Lower leg skin (tissue), 4 donors: ENCODE measurements at regions of chr20 and their contacts with region 1.

Region 1: DNA sequence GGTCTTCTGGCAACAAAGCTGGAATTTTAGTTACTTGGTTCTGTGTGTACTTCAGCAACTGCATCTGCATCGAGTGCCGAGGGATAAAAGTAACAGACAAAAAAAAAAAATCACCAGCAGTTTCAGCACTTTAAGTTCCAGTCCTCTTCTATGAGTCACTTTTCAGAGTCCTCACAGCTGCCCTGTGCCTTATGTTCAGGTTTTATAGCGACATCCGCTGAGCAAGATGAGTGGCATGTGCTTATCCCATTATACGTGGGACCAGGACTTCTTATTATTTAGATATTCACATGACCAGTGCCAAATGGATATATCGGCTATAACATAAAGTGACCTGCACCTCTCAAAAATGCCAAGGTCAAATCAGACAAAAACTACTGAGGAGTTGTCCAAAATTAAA is 242.9 kb downstream of the FOXA2 start:
- DNase-seq: no peak
- H3K4me3 ChIP-seq: no peak overlapping the region
- CTCF ChIP-seq: no peak
- POLR2A ChIP-seq: no peak

Region 2: DNA sequence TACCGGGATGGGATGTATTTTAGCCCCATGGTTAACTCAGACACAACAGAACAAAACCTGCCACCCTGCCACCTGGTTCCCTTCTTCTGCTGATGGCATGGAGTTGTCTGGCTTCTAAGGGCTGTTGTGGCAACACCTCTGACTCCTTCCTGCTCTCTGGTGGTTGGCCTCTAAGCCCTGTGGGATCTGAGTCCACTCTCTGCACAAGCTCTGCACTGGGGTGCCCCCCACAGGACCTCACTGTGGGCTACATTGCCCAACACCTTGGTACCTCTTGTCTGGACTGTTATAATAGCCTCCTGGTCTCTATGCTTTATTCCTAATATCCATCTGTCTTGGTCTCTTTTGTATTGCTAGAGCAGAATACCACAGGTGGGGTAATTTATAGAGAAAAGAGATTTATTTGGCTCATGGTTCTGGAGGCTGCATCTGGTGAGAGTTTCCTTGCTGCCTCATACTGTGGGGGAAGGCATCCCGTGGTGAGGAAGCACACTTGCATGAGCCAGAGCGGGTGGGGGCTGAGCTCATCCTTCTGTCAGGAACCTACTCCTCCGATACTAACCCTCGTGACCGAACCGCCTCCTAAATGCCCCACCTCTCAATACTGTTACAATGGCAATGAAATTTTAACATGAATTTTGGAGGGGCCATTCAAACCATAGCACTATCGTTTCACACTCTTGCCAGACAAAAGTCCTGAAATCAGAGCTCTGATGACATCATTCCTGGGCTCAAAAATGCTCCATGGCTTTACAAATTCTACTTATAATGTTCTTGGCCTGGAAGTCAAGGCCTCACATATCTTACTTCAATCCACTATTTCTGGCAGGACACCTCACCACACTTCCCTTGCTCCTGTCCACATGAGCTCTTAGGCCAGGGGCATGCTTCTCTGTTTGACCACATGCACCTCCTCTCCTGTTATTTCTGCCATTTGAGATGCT is 508.8 kb before region 1 on chr20:
- intact Hi-C with region 1: no loop called
- DNase-seq: no peak
- H3K4me3 ChIP-seq: no peak overlapping the region
- CTCF ChIP-seq: no peak
- POLR2A ChIP-seq: no peak

Region 3: GRCh38 chr20:22684072-22684762 is 342.7 kb after region 1 on chr20:
- intact Hi-C with region 1: loop called (anchors 5 kb)
- DNase-seq: peak in 1 of 2 donors; percentile 55
- H3K4me3 ChIP-seq: no peak overlapping the region
- CTCF ChIP-seq: peak in 1 of 3 donors; percentile 51
- POLR2A ChIP-seq: no peak